HAP-1 (cell line): ENCODE measurements at regions of chr6 and their contacts with region 1.

Region 1: GRCh38 chr6:20534295-20535262 is at the start of gene CDKAL1:
- DNase-seq: peak; percentile 83 to 89
- H3K4me3 ChIP-seq: peak within 1 kb of the TSS; percentile 74
- H3K4me1 ChIP-seq: peaks cover 7% of the 10 kb centered on the region
- H3K27me3 ChIP-seq: no peaks in the 10 kb centered on the region

Region 2: GRCh38 chr6:20092071-20092566 is 442.5 kb before region 1 on chr6:
- in situ Hi-C with region 1: loop called (anchors 10 kb)
- DNase-seq: peak; percentile 27 to 71
- H3K4me3 ChIP-seq: no peak overlapping the region
- H3K4me1 ChIP-seq: no peaks in the 10 kb centered on the region
- H3K27me3 ChIP-seq: no peaks in the 10 kb centered on the region

Region 3: GRCh38 chr6:20401205-20402091 is 133.1 kb before region 1 on chr6 and contains the start of gene E2F3:
- in situ Hi-C with region 1: loop called (anchors 5 kb)
- DNase-seq: peak; percentile 99
- H3K4me3 ChIP-seq: peak within 1 kb of the TSS; percentile 90
- H3K4me1 ChIP-seq: peaks cover 10% of the 10 kb centered on the region
- H3K27me3 ChIP-seq: peaks cover 3% of the 10 kb centered on the region